Naive thymus-derived CD4-positive, alpha-beta T cell (primary cell): ENCODE measurements at regions of chr4 and their contacts with region 1.

Region 1: DNA sequence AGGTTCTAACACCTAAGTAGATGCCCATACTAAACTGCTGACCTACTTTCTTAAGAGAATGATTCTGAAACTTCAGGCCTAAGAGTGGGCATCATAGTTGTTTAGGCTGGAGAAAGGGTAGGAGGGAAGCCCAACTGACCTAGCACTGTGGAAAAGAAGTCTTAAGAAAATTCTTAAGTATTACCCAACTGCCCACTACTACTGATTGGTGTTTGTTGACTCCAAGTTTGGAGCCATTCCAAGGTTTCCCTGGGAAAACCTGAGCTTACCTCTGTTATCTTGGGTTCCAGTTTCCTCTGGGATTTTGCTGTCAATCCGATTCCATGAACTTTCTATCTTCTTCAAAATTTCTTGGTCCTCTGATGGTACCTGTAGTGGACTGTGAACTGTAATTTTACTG is 23.9 kb downstream of the ANKRD17 start:
- DNase-seq: no peak
- ATAC-seq: no peak
- H3K4me3 ChIP-seq: no peak overlapping the region
- H3K4me3 Mint-ChIP-seq: no peak overlapping the region
- H3K27ac ChIP-seq: no peak overlapping the region
- H3K27ac Mint-ChIP-seq: peak overlapping the region in 3 of 9 donors; percentile 28 to 55 (median 34)
- H3K4me1 ChIP-seq: no peaks in the 10 kb centered on the region
- H3K4me1 Mint-ChIP-seq: peaks cover 21 to 67% (median 59%) of the 10 kb centered on the region in 7 donors
- H3K27me3 ChIP-seq: no peaks in the 10 kb centered on the region
- H3K27me3 Mint-ChIP-seq: no peaks in the 10 kb centered on the region

Region 2: DNA sequence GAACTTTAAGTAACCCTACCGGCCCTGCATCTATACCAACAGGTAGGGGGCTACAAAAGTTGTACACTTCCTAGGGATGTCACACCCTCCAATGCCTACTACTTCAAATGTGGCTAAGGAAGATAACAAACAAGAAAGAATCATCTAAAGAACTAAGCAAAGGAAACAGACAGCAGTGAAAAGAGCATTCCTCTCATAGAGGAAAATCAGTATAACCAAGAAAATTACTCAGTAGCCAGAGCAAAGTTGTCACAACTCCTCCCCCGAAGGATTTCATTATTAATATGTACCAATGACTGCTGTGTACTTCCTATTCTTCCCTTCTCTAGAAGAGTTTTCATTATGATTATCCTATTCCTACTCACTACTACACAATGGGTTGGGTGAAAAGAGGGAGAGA is 11.2 kb after region 1 on chr4:
- CTCF ChIA-PET with region 1: no interaction called
- POLR2A ChIA-PET with region 1: no interaction called
- intact Hi-C with region 1: loop called in 1 of 2 experiments (anchors 2 kb)
- DNase-seq: no peak
- ATAC-seq: no peak
- H3K4me3 ChIP-seq: no peak overlapping the region
- H3K4me3 Mint-ChIP-seq: peak overlapping the region in 6 of 10 donors; percentile 0 to 40 (median 28)
- H3K27ac ChIP-seq: no peak overlapping the region
- H3K27ac Mint-ChIP-seq: peak overlapping the region in 5 of 9 donors; percentile 3 to 32 (median 16)
- H3K4me1 ChIP-seq: peaks cover 11 to 12% of the 10 kb centered on the region in 2 donors
- H3K4me1 Mint-ChIP-seq: peaks cover 36 to 91% (median 81%) of the 10 kb centered on the region in 7 donors
- H3K27me3 ChIP-seq: no peaks in the 10 kb centered on the region
- H3K27me3 Mint-ChIP-seq: no peaks in the 10 kb centered on the region